ENCODE measurements at regions of chr14 and their contacts with region 1.

Region 1: DNA sequence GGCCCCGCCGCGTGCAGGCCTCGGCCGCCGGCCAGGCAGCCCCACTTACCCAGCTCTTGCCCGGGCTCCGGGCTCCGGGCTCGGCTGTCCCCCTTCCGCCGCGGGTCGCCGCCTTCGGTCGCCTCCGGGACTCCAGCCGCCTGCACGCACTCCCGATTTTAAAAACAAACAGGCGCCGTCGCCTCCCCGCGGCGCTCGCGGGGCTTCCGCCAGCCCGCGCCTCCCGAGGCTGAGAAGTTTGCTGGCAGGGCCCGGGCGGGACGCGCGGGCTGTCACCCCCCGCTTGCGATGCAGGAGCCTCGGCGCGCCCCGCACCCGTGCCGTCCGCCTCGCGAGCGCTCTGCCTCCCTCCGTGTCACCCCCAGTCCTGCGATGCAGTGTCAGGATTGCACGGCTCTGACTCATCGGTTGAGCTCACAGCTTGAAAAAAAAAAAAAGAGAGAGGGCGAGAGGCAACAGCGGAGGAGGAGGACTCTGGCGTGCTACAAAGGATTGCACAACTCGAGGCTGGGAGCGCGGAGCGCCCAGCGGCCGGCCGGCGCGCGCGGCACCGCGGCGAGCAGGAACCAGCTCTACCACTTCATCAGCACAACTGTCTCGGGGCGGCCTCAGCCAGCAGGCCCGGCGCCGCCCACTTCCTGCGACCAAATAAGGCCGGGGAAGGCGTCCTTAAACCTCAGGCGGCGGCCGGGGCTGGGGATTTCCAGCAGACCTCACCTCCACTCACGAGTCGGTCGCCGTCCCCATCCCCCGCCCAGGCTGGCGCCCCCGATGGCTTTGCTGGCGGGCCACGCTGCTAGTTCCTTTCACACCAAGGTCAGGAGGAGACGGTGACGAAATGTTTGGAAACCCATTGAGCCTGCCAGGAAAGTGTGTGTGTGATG is 45.8 kb upstream of the PNMA1 start:
- DNase-seq: peak in 1 of 2 donors; percentile 99
- H3K4me3 ChIP-seq: peak overlapping the region; percentile 68 to 96
- H3K27ac ChIP-seq: peak overlapping the region; percentile 98
- H3K4me1 ChIP-seq: peaks cover 85% of the 10 kb centered on the region
- H3K27me3 ChIP-seq: no peaks in the 10 kb centered on the region
- CTCF ChIP-seq: no peak
- POLR2A ChIP-seq: peak in 1 of 2 donors; percentile 94

Region 2: GRCh38 chr14:73728717-73729330 is 31.1 kb before region 1 on chr14:
- intact Hi-C with region 1: loop called (anchors 5 kb)
- DNase-seq: no peak
- H3K4me3 ChIP-seq: no peak overlapping the region
- H3K27ac ChIP-seq: peak overlapping the region; percentile 69
- H3K4me1 ChIP-seq: peaks cover 46% of the 10 kb centered on the region
- H3K27me3 ChIP-seq: no peaks in the 10 kb centered on the region
- CTCF ChIP-seq: peak; percentile 93 to 95 (median 94)
- POLR2A ChIP-seq: no peak

Region 3: GRCh38 chr14:73741386-73741875 is 18.5 kb before region 1 on chr14:
- intact Hi-C with region 1: loop called (anchors 1 kb)
- DNase-seq: no peak
- H3K4me3 ChIP-seq: peak overlapping the region; percentile 36 to 39
- H3K27ac ChIP-seq: peak overlapping the region; percentile 93
- H3K4me1 ChIP-seq: peaks cover 82% of the 10 kb centered on the region
- H3K27me3 ChIP-seq: no peaks in the 10 kb centered on the region
- CTCF ChIP-seq: no peak
- POLR2A ChIP-seq: no peak